Sciatic nerve (tissue), 2 donors: ENCODE measurements at regions of chr4 and their contacts with region 1.

Region 1: GRCh38 chr4:120331486-120332370 is 265.1 kb upstream of the MAD2L1 start:
- DNase-seq: no peak
- ATAC-seq: no peak

Region 2: DNA sequence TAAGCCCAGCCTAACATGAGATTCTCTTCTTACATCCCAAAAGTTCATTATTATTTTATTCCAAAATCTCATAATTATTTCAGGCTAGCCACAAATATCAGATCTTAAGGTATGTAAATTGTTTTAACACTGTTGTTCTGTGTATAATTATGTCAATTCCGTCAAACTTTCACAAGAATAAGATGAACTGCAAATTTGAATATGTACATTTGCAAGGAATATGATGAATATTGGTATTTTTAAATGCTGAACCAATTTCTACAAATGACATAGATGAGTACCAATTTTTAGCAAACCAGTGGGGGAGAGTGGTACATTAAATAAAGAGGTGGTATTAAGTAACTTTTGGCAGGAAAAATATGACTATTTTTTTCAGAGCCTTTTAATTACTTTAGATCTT is 17.2 kb after region 1 on chr4:
- intact Hi-C with region 1: loop called (anchors 1 kb)
- DNase-seq: no peak
- ATAC-seq: no peak